ENCODE measurements at regions of chr20 and their contacts with region 1.

Region 1: DNA sequence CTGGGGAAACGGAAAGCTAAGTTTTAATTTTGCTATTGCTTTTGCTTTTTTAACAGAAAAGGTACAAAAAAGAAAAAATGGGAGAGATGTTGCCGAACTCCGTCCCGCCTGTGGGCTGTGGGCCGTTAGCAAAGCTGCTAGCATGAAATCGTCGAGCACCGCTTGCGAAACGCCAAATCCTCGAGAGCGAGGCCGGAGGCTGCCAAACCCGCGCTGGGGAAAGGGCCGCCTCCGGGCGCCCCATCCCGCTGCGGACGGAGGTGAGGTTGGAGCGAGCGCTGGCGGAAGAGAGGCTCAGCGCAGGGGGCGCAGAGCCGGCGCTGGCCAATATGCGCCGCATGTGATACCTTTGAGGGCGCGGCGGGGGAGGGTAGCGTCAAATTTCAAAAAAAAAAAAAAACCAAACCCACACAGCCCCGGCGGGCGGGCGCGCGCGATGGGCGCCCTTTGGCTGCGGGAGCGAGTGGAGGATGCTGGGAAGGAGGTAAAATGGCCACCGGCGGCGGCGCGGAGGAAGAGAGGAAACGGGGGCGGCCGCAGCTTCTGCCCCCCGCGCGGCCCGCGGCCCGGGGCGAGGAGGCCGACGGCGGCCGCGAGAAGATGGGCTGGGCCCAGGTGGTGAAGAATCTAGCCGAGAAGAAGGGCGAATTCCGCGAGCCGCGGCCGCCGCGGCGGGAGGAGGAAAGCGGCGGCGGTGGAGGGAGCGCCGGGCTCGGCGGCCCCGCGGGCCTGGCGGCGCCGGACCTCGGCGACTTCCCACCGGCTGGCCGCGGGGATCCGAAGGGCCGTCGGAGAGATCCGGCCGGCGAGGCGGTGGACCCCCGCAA is at the start of gene ZCCHC3:
- DNase-seq: peak; percentile 94
- ATAC-seq: peak; percentile 86
- H3K4me3 ChIP-seq: peak within 1 kb of the TSS; percentile 84 to 94 (median 90)
- H3K4me3 Mint-ChIP-seq: peak within 1 kb of the TSS; percentile 99
- H3K27ac ChIP-seq: peak within 1 kb of the TSS; percentile 85 to 88
- H3K27ac Mint-ChIP-seq: peak within 1 kb of the TSS; percentile 100
- H3K4me1 ChIP-seq: peaks cover 16 to 27% of the 10 kb centered on the region in 2 donors
- H3K4me1 Mint-ChIP-seq: peaks cover 40% of the 10 kb centered on the region
- H3K27me3 ChIP-seq: no peaks in the 10 kb centered on the region
- H3K27me3 Mint-ChIP-seq: no peaks in the 10 kb centered on the region
- CTCF ChIP-seq: peak; percentile 19
- total RNA-seq, gene ZCCHC3: 34.5 and 35.7 TPM in 2 replicates

Region 2: DNA sequence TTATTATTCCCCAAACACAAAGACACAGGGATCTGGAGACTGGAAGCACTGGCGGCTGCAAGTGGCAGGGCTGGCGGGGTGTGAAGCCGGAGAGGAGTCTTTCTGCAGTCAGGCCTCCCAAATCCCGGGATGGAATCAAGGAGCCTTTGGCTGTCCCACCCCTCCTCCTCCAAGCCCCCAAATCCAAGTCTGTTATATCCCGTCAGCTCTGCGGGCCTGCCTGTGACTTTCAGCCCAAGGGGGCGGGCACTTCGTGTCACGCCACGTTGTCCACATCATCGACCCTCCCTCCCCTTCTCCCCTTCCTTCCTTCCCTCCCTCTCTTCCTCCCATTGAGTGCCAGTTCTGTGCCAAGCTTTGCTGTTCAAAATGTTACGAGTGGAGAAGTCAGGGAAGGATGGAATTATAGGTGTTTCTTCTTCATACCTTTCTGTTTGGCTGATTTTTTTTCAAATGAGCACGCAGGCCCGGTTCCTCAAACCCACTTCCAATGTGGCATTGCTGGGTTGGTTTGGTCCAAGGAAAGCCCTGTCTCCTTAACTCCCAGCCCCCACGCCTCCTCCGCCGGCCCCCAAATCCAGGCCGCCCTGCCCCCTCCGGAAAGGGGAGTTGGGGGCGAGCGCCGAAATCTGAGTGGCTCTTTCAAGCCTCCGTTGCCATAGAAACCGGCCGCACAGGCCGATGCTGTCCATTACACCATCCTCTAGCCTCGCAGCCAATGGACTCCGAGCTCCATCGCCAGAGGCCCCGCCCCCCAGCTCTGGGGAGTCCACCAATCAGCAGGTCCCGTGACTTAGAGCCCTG is 12.7 kb after region 1 on chr20:
- CTCF ChIA-PET with region 1: interaction called, 12 read pairs
- POLR2A ChIA-PET with region 1: no interaction called
- intact Hi-C with region 1: loop called (anchors 1 kb)
- DNase-seq: peak; percentile 89
- ATAC-seq: peak; percentile 100
- H3K4me3 ChIP-seq: peak overlapping the region in 4 of 5 experiments; percentile 35 to 62 (median 44)
- H3K4me3 Mint-ChIP-seq: peak overlapping the region; percentile 92
- H3K27ac ChIP-seq: peak overlapping the region in 1 of 2 donors; percentile 14
- H3K27ac Mint-ChIP-seq: peak overlapping the region; percentile 89
- H3K4me1 ChIP-seq: peaks cover 10 to 13% of the 10 kb centered on the region in 2 donors
- H3K4me1 Mint-ChIP-seq: peaks cover 16% of the 10 kb centered on the region
- H3K27me3 ChIP-seq: no peaks in the 10 kb centered on the region
- H3K27me3 Mint-ChIP-seq: no peaks in the 10 kb centered on the region
- CTCF ChIP-seq: no peak

Region 3: GRCh38 chr20:543369-544152 is 246.2 kb after region 1 on chr20 and contains the start of gene CSNK2A1:
- CTCF ChIA-PET with region 1: no interaction called
- POLR2A ChIA-PET with region 1: interaction called, 3 read pairs
- intact Hi-C with region 1: loop called (anchors 1 kb)
- DNase-seq: peak; percentile 99
- ATAC-seq: peak; percentile 91
- H3K4me3 ChIP-seq: peak within 1 kb of the TSS; percentile 30 to 98 (median 85)
- H3K4me3 Mint-ChIP-seq: peak within 1 kb of the TSS; percentile 95
- H3K27ac ChIP-seq: peak within 1 kb of the TSS; percentile 93 to 99
- H3K27ac Mint-ChIP-seq: peak within 1 kb of the TSS; percentile 100
- H3K4me1 ChIP-seq: peaks cover 33 to 36% of the 10 kb centered on the region in 2 donors
- H3K4me1 Mint-ChIP-seq: peaks cover 53% of the 10 kb centered on the region
- H3K27me3 ChIP-seq: peaks cover 0 to 4% (median 2%) of the 10 kb centered on the region in 4 experiments
- H3K27me3 Mint-ChIP-seq: peaks cover 4% of the 10 kb centered on the region
- CTCF ChIP-seq: no peak
- total RNA-seq, gene CSNK2A1: 125 and 135 TPM in 2 replicates

Measured in B cell (primary cell).